ENCODE measurements at regions of chr18 and their contacts with region 1.

Region 1: DNA sequence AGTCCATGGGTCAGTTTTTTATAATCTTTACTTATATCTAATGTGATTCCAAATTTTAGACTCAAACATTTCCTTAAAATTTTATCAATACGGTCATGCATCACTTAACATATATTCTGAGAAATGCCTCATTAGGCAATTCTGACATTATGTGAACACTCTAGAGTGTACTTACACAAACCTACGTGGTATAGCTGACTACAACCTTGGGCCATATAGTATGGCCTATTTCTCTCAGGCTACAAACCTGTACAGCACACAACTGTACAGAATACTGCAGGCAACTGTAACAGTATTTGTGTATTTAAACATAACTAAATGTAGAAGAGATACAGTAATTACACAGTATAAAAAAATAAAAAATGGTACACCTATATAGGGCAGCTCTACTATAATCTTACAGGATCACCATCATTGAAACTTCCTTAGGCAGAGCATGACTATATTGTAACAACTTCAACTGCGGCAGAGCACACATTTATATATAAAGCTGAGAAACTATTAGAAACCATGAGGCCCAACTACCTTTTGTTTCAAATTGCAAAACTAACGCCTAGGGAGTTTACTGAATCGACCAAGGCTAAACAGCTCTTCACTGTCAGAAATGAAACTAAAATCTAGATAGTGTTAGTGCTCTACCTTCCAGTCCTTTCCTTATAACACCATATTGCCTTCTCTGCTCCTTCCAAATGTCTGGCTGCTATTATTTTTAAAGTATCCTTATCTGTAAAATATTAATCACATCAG is 6.9 kb downstream of the YES1 start:
- DNase-seq: peak in 1 of 4 experiments; percentile 10
- ATAC-seq: peak; percentile 20
- H3K4me3 ChIP-seq: peak overlapping the region; percentile 12; the same call in 1 of the 2 replicates
- H3K27ac ChIP-seq: peak overlapping the region; percentile 58; the same call in 2 of the 3 replicates
- H3K4me1 ChIP-seq: peaks cover 15 to 40% of the 10 kb centered on the region in 2 experiments; a peak in 3 of 5 replicates
- H3K27me3 ChIP-seq: no peaks in the 10 kb centered on the region
- CTCF ChIP-seq: no peak
- EP300 ChIP-seq: no peak
- POLR2A ChIP-seq: no peak
- RAD21 ChIP-seq: no peak

Region 2: GRCh38 chr18:785242-785641 is 19.9 kb before region 1 on chr18:
- CTCF ChIA-PET with region 1: no interaction called
- POLR2A ChIA-PET with region 1: interaction called, 67 read pairs
- in situ Hi-C with region 1: no loop called
- intact Hi-C with region 1: no loop called
- DNase-seq: no peak
- ATAC-seq: peak; percentile 11
- H3K4me3 ChIP-seq: no peak overlapping the region
- H3K27ac ChIP-seq: no peak overlapping the region; the same call in 2 of the 3 replicates
- H3K4me1 ChIP-seq: peaks cover 20 to 41% of the 10 kb centered on the region in 2 experiments
- H3K27me3 ChIP-seq: no peaks in the 10 kb centered on the region
- CTCF ChIP-seq: no peak
- EP300 ChIP-seq: no peak
- POLR2A ChIP-seq: no peak
- RAD21 ChIP-seq: no peak

Region 3: DNA sequence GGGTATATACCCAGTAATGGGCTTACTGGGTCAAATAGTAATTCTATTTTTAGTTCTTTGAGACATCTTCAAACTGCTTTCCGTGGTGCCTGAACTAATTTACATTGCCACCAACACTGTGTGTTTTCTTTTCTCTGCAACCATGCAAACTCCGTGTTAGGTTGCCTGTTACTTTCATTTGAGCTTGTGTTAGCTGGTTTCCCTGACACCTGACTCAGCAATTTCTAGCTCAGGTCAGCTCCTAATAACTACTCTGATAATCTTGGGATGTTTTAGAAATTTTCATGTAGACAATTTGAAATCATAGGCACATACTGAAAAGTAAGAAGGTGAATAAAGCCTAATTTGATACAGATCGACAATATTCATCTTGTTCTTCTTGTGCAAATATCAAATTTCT is 231.7 kb after region 1 on chr18:
- CTCF ChIA-PET with region 1: no interaction called
- POLR2A ChIA-PET with region 1: no interaction called
- in situ Hi-C with region 1: no loop called
- intact Hi-C with region 1: no loop called
- DNase-seq: peak in 1 of 4 experiments; percentile 17
- ATAC-seq: no peak
- H3K4me3 ChIP-seq: no peak overlapping the region
- H3K27ac ChIP-seq: no peak overlapping the region; the same call in 2 of the 3 replicates
- H3K4me1 ChIP-seq: no peaks in the 10 kb centered on the region; a peak in 1 of 5 replicates
- H3K27me3 ChIP-seq: peaks cover 0 to 4% of the 10 kb centered on the region in 2 experiments; a peak in 1 of 5 replicates
- CTCF ChIP-seq: no peak
- EP300 ChIP-seq: no peak
- POLR2A ChIP-seq: no peak
- RAD21 ChIP-seq: no peak